GM12878 (cell line): ENCODE measurements at regions of chr3 and their contacts with region 1.

Region 1: DNA sequence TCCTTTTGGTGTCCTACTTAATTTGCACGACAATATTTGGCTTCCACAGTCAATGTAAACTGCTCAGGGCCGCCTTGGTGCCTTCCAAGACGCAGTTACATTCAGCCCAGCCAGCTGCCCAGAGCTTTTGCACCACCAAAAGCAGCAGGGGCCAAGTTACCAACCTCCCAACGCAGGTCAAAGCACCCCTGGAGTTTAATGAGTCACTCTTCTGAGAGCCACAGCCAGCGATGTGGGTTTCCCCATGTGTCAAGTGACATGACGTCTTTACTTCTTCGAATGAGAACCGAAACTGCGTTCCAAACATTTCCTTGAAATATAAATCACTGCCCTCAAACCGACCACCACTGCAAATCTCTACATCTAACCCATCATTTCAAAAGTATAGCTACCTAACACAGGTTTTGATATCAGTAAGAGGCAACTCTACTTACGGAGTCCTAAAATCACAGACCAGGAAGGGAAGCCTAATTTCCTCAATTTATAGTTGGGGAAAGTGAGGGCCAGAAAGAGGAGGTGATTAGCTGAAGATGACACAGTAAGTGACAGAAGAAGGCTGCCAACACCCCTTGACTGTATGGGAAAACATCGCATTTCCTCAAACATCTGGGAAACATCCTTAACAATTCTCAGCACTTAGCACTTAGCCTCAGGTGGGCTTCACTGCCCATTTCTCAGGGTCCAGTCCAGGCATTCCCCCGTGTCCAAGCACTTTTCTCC is 24.5 kb downstream of the MB21D2 start:
- DNase-seq: peak; percentile 94
- ATAC-seq: peak; percentile 93
- H3K4me3 ChIP-seq: no peak overlapping the region; the same call in 1 of the 2 replicates
- H3K27ac ChIP-seq: peak overlapping the region; percentile 96
- H3K4me1 ChIP-seq: peaks cover 74% of the 10 kb centered on the region
- H3K27me3 ChIP-seq: no peaks in the 10 kb centered on the region
- CTCF ChIP-seq: no peak
- EP300 ChIP-seq: peak; percentile 98 to 99
- POLR2A ChIP-seq: peak; percentile 55
- RAD21 ChIP-seq: peak; percentile 25; the same call in 1 of the 2 replicates

Region 2: GRCh38 chr3:192825657-192826200 is 67.4 kb before region 1 on chr3:
- CTCF ChIA-PET with region 1: interaction called, 12 read pairs
- POLR2A ChIA-PET with region 1: interaction called, 4 read pairs
- RAD21 ChIA-PET with region 1: interaction called, 15 read pairs
- SMC1A ChIA-PET with region 1: interaction called, 179 read pairs
- in situ Hi-C with region 1: no loop called
- intact Hi-C with region 1: no loop called
- DNase-seq: no peak
- ATAC-seq: peak; percentile 76
- H3K4me3 ChIP-seq: no peak overlapping the region
- H3K27ac ChIP-seq: no peak overlapping the region
- H3K4me1 ChIP-seq: peaks cover 20% of the 10 kb centered on the region
- H3K27me3 ChIP-seq: no peaks in the 10 kb centered on the region
- CTCF ChIP-seq: peak in 2 of 3 experiments; percentile 0 to 20; a peak in 1 of 6 replicates
- EP300 ChIP-seq: peak; percentile 83 to 95; a peak in 3 of 4 replicates
- POLR2A ChIP-seq: no peak
- RAD21 ChIP-seq: 0 out of 2 replicates have a peak, but pooled peaks have one; percentile 14

Region 3: GRCh38 chr3:192831111-192831644 is 62.0 kb before region 1 on chr3:
- CTCF ChIA-PET with region 1: interaction called, 3 read pairs
- POLR2A ChIA-PET with region 1: interaction called, 4 read pairs
- RAD21 ChIA-PET with region 1: interaction called, 15 read pairs
- SMC1A ChIA-PET with region 1: interaction called, 283 read pairs
- in situ Hi-C with region 1: no loop called
- intact Hi-C with region 1: no loop called
- DNase-seq: no peak
- ATAC-seq: peak; percentile 53
- H3K4me3 ChIP-seq: peak overlapping the region; percentile 28; the same call in 1 of the 2 replicates
- H3K27ac ChIP-seq: peak overlapping the region; percentile 80
- H3K4me1 ChIP-seq: peaks cover 18% of the 10 kb centered on the region
- H3K27me3 ChIP-seq: no peaks in the 10 kb centered on the region
- CTCF ChIP-seq: no peak
- EP300 ChIP-seq: no peak
- POLR2A ChIP-seq: no peak
- RAD21 ChIP-seq: no peak

Region 4: DNA sequence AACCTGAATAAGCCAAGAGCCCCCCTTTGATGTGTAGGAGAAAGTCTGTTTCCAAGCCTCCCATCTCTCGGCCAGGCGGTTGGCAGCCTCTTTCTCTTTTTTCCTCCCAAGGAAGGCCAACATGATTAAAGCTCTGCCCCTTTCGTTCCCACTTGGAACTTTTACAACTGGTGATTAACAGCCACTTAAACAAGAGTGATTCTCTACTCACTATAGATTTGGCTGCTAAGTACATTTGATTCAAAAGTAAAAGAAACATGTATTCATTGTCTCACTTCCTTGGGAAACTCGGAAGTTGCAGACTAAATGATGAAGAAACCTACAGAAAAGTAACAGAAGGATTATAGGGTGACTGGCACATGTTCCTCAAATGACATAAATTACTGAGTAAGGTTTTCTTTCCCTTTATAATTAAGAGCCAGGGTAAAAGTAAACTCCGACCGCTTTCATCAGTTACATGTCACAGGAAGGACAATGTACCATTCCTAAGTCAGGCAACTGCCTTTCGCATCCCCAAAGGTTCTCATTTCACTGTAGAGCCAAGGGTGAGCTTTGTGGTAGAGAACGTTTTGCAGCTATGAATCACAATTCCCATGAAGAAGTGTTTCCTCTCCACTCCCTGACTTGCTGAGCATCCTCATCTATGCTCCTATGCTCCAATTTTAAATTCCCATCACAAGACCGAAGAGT is 48.2 kb before region 1 on chr3:
- CTCF ChIA-PET with region 1: interaction called, 27 read pairs
- POLR2A ChIA-PET with region 1: interaction called, 16 read pairs
- RAD21 ChIA-PET with region 1: interaction called, 105 read pairs
- SMC1A ChIA-PET with region 1: interaction called, 283 read pairs
- in situ Hi-C with region 1: no loop called
- intact Hi-C with region 1: loop called (anchors 1 kb)
- DNase-seq: no peak
- ATAC-seq: no peak
- H3K4me3 ChIP-seq: no peak overlapping the region
- H3K27ac ChIP-seq: peak overlapping the region; percentile 61
- H3K4me1 ChIP-seq: peaks cover 51% of the 10 kb centered on the region
- H3K27me3 ChIP-seq: no peaks in the 10 kb centered on the region
- CTCF ChIP-seq: no peak
- EP300 ChIP-seq: no peak
- POLR2A ChIP-seq: no peak
- RAD21 ChIP-seq: no peak

Region 5: GRCh38 chr3:192864941-192865340 is 28.2 kb before region 1 on chr3:
- CTCF ChIA-PET with region 1: interaction called, 7 read pairs
- POLR2A ChIA-PET with region 1: interaction called, 10 read pairs
- RAD21 ChIA-PET with region 1: interaction called, 8 read pairs
- SMC1A ChIA-PET with region 1: interaction called, 18 read pairs
- in situ Hi-C with region 1: no loop called
- intact Hi-C with region 1: no loop called
- DNase-seq: no peak
- ATAC-seq: peak; percentile 70
- H3K4me3 ChIP-seq: no peak overlapping the region
- H3K27ac ChIP-seq: peak overlapping the region; percentile 80
- H3K4me1 ChIP-seq: peaks cover 42% of the 10 kb centered on the region
- H3K27me3 ChIP-seq: no peaks in the 10 kb centered on the region
- CTCF ChIP-seq: no peak
- EP300 ChIP-seq: no peak
- POLR2A ChIP-seq: no peak
- RAD21 ChIP-seq: no peak

Region 6: DNA sequence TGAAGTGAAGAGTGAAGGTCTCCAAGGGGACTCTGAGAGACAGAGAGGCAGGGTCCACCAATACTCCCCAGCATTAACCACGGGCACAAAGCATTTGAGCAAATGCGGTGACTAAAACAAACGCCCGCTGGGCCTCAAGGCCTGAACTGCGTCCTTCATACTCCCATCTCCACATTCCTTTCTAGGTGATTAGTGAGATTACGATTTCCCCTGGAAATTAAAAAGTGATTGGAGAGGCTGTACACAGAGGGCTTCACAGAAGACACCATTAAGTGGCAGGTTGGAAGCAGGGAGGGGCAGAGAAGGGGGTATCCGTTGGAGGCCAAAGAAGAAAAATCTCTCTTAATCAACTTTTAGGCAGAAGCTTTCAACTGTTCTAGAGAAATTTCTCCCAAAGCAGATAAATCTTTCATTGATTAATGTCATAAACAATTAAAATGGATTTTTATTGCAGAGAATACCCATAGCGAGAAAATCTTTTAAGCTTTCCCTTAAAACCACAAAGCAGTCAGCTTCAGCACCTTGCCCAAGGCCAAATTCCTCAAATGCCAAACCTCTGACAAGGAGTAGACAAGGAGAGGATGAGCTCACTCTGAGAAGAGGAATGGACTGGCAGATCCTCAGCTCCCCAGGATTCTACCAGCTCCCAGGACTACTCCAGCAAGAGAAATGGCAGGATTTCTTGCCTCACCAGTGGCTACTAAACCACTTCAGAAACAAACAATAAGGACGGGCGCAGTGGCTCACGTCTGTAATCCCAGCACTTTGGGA is 13.6 kb before region 1 on chr3:
- CTCF ChIA-PET with region 1: interaction called, 9 read pairs
- POLR2A ChIA-PET with region 1: interaction called, 8 read pairs
- RAD21 ChIA-PET with region 1: interaction called, 7 read pairs
- SMC1A ChIA-PET with region 1: interaction called, 27 read pairs
- in situ Hi-C with region 1: no loop called
- intact Hi-C with region 1: no loop called
- DNase-seq: no peak
- ATAC-seq: no peak
- H3K4me3 ChIP-seq: no peak overlapping the region
- H3K27ac ChIP-seq: no peak overlapping the region
- H3K4me1 ChIP-seq: 0 out of 2 replicates have a peak, but pooled peaks cover 3% of the 10 kb centered on the region
- H3K27me3 ChIP-seq: no peaks in the 10 kb centered on the region
- CTCF ChIP-seq: no peak
- EP300 ChIP-seq: no peak
- POLR2A ChIP-seq: no peak
- RAD21 ChIP-seq: no peak